Activated T-helper 2 cell treated with anti-CD3 and anti-CD28 coated beads, Interferon-gamma antibody, Interleukin-2, Interleukin-4, amounts not matched to agents 10 μg/mL and 5 μg/mL and 100 μg/mL, durations not matched to agents 14 hours and 24 hours and 36 hours (primary cell): ENCODE measurements at regions of chr6 and their contacts with region 1.

Region 1: GRCh38 chr6:39714802-39715201 is 10.4 kb downstream of the KIF6 start:
- DNase-seq: no peak
- H3K4me3 Mint-ChIP-seq: no peak overlapping the region
- H3K27ac Mint-ChIP-seq: no peak overlapping the region
- H3K4me1 Mint-ChIP-seq: no peaks in the 10 kb centered on the region
- H3K27me3 Mint-ChIP-seq: peaks cover 7% of the 10 kb centered on the region

Region 2: DNA sequence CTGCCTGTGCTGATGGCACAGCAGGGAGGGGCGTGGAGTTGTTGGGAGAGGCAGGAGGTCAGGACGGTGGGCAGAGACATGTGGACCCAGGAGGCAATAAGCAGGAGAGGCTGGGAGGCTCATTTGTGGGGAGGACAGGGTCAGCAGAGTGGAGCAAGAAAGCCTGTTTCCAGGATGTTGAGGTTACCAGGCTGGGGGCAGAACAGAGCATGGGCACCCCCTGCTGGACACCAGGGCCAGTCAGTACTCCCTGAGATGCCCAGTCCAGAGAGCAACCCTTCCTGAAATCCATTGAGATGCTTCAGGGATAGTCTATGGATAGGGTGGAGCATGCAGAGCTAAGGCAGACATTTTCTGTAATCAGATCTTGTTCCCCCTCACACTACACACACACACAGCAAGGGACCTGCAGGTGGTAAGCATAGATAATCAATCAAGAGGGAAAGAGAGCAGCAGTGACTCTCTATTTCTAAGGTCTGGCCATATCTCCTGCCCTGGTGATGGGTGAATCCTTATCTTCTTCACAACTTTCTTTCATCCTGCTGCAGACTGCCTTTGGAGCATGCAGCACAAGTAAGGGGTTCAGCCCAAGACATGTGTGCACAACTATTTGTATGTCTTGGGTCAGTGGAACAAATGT is 177.8 kb after region 1 on chr6:
- intact Hi-C with region 1: no loop called
- DNase-seq: no peak
- H3K4me3 Mint-ChIP-seq: no peak overlapping the region
- H3K27ac Mint-ChIP-seq: no peak overlapping the region
- H3K4me1 Mint-ChIP-seq: no peaks in the 10 kb centered on the region
- H3K27me3 Mint-ChIP-seq: peaks cover 4% of the 10 kb centered on the region

Region 3: GRCh38 chr6:40894962-40895799 is 1180.4 kb after region 1 on chr6:
- intact Hi-C with region 1: loop called (anchors 5 kb)
- DNase-seq: no peak
- H3K4me3 Mint-ChIP-seq: no peak overlapping the region
- H3K27ac Mint-ChIP-seq: no peak overlapping the region
- H3K4me1 Mint-ChIP-seq: no peaks in the 10 kb centered on the region
- H3K27me3 Mint-ChIP-seq: no peaks in the 10 kb centered on the region